A549 (cell line): ENCODE measurements at regions of chr15 and their contacts with region 1.

Region 1: DNA sequence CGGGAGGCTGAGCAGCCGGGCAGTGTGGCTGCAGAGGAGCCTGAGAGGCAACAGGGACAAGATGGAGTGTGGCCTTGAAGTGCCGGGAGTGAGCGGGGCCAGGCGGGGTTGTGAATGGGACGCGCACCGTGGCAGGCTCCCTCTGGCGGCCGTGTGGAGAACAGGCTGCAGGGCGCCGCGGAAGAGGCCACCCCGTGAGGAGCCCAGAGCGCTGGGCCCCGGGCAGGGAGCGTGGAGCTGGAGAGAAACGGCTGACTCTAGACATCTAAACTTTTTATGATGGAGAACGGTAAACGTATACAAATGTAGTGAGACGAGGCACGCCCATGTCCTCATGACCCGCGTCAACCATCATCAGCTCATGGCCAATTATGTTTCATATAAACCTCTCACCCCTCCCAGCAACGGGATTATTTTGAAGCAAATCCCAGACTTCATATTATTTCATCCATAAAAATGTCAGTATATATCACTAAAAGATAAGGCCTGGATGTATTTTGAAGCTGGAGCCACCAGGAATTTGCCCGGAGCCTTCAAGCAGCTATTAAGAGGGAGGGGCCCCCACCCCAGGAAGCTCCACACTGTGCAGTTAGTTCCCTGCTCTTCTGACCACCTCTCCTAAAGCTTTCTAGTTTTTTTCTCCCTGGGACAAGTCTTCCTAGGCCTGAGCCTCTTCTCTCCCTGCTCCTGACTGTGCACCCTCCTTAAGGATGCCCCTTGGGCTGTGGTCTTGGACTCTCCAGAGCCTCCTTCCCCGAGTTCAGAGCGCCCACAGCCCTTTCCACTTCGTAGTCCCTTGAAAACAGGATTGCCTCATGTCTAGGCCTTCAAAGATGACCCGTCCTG is 149.4 kb downstream of the SMAD6 start:
- DNase-seq: peak; percentile 92 to 97
- ATAC-seq: peak; percentile 87 to 95
- H3K4me3 ChIP-seq: no peak overlapping the region
- H3K27ac ChIP-seq: peak overlapping the region; percentile 64 to 81
- H3K4me1 ChIP-seq: peaks cover 34% of the 10 kb centered on the region
- CTCF ChIP-seq: peak; percentile 93
- EP300 ChIP-seq: no peak
- POLR2A ChIP-seq: no peak
- RAD21 ChIP-seq: peak; percentile 83 to 93

Region 2: GRCh38 chr15:66221126-66221525 is 630.3 kb before region 1 on chr15:
- CTCF ChIA-PET with region 1: no interaction called
- POLR2A ChIA-PET with region 1: no interaction called
- DNase-seq: no peak
- ATAC-seq: peak in 1 of 2 experiments; percentile 10; a peak in 1 of 6 replicates
- H3K4me3 ChIP-seq: no peak overlapping the region
- H3K27ac ChIP-seq: no peak overlapping the region
- H3K4me1 ChIP-seq: no peaks in the 10 kb centered on the region
- CTCF ChIP-seq: no peak
- EP300 ChIP-seq: no peak
- POLR2A ChIP-seq: no peak
- RAD21 ChIP-seq: no peak

Region 3: GRCh38 chr15:66619151-66619903 is 232.1 kb before region 1 on chr15:
- CTCF ChIA-PET with region 1: interaction called, 58 read pairs
- POLR2A ChIA-PET with region 1: interaction called, 4 read pairs
- DNase-seq: peak; percentile 83 to 92
- ATAC-seq: peak; percentile 87 to 95
- H3K4me3 ChIP-seq: no peak overlapping the region
- H3K27ac ChIP-seq: peak overlapping the region; percentile 69 to 81
- H3K4me1 ChIP-seq: peaks cover 18% of the 10 kb centered on the region
- CTCF ChIP-seq: peak; percentile 97
- EP300 ChIP-seq: no peak
- POLR2A ChIP-seq: no peak
- RAD21 ChIP-seq: peak; percentile 85 to 86

Region 4: DNA sequence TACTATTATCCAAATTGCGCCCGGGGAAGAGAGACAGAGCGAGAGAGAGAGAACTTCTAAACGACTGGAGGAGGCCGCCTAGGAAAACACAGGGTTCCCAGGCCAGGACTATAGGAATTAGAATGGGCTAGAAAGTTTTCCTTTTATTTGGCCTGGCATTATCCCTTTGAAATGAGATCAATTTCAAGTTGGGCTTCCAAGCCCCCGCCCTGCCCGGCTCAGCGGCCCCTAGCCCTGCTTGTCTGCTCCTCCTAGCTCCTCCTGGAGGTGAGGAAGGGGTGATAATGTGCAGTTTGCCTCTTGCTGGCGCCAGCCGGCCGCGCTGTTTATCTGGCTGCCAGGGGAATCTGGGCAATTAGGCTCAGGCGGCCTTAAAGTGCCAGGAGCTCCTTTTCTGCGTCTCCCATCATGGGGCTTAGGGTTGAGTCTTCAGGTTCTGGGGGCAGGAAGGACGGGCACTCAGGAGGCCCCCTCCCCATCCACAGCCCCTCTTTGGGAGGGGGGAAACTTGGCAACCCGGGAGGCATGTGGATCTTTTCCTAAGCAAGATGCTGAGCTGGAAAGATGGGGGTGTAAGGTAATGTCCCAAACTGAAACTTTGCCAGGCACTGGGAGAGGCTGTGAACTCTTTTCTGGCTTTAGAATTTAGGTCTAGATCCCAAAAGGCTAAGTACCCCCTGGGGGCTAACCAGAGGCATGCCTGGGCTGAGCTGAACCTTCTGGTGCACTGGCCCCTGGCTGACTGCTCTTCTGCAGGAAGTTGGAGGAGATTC is 144.0 kb before region 1 on chr15:
- CTCF ChIA-PET with region 1: interaction called, 283 read pairs
- POLR2A ChIA-PET with region 1: interaction called, 14 read pairs
- DNase-seq: peak; percentile 63 to 73
- ATAC-seq: peak; percentile 31 to 70; a peak in 4 of 6 replicates
- H3K4me3 ChIP-seq: peak overlapping the region; percentile 90; the same call in 2 of the 3 replicates
- H3K27ac ChIP-seq: peak overlapping the region; percentile 47 to 95
- H3K4me1 ChIP-seq: peaks cover 76% of the 10 kb centered on the region
- CTCF ChIP-seq: peak; percentile 41
- EP300 ChIP-seq: no peak
- POLR2A ChIP-seq: no peak
- RAD21 ChIP-seq: peak; percentile 53 to 68

Region 5: GRCh38 chr15:66765478-66766281 is 85.8 kb before region 1 on chr15:
- CTCF ChIA-PET with region 1: interaction called, 236 read pairs
- POLR2A ChIA-PET with region 1: interaction called, 3 read pairs
- DNase-seq: peak; percentile 95 to 97
- ATAC-seq: peak; percentile 71 to 75
- H3K4me3 ChIP-seq: no peak overlapping the region; the same call in 1 of the 3 replicates
- H3K27ac ChIP-seq: peak overlapping the region; percentile 93 to 94
- H3K4me1 ChIP-seq: peaks cover 97% of the 10 kb centered on the region
- CTCF ChIP-seq: no peak
- EP300 ChIP-seq: peak; percentile 95 to 98
- POLR2A ChIP-seq: no peak
- RAD21 ChIP-seq: peak in 1 of 2 experiments; percentile 67; a peak in 4 of 5 replicates

Region 6: GRCh38 chr15:66808181-66808825 is 43.1 kb before region 1 on chr15:
- CTCF ChIA-PET with region 1: interaction called, 51 read pairs
- POLR2A ChIA-PET with region 1: no interaction called
- DNase-seq: no peak
- ATAC-seq: no peak
- H3K4me3 ChIP-seq: no peak overlapping the region
- H3K27ac ChIP-seq: no peak overlapping the region
- H3K4me1 ChIP-seq: peaks cover 12% of the 10 kb centered on the region
- CTCF ChIP-seq: no peak
- EP300 ChIP-seq: no peak
- POLR2A ChIP-seq: no peak
- RAD21 ChIP-seq: no peak

Region 7: DNA sequence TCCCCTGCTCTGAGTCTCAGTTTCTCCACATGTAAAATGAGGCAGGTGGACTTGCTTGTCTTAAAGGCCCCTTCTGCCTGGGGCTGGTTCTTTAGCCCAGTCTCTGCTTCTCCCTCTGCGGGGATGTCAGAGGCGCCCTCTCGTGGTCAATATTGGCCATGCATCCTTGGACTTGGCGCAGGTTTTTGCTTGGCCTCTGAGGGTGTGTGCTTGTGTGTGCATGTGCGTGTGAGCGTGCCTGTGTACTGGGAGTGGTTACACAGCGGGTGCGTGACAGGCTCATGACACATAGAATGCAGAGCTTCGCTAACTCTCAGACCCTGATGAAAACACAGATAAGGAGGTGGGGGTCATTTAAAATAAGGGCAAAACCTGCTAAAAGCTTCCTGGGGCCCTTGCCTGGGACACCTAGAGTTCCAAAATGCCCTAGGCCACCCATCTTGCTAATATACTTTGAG is 11.5 kb after region 1 on chr15:
- CTCF ChIA-PET with region 1: interaction called, 224 read pairs
- POLR2A ChIA-PET with region 1: no interaction called
- DNase-seq: peak; percentile 87 to 90
- ATAC-seq: peak; percentile 85 to 97
- H3K4me3 ChIP-seq: no peak overlapping the region
- H3K27ac ChIP-seq: peak overlapping the region; percentile 1 to 66; a peak in 4 of 6 replicates
- H3K4me1 ChIP-seq: peaks cover 17% of the 10 kb centered on the region
- CTCF ChIP-seq: peak; percentile 98
- EP300 ChIP-seq: no peak
- POLR2A ChIP-seq: no peak
- RAD21 ChIP-seq: peak; percentile 83 to 87

Region 8: GRCh38 chr15:66968806-66969596 is 117.6 kb after region 1 on chr15:
- CTCF ChIA-PET with region 1: no interaction called
- POLR2A ChIA-PET with region 1: no interaction called
- DNase-seq: no peak
- ATAC-seq: no peak
- H3K4me3 ChIP-seq: no peak overlapping the region
- H3K27ac ChIP-seq: no peak overlapping the region
- H3K4me1 ChIP-seq: no peaks in the 10 kb centered on the region
- CTCF ChIP-seq: no peak
- EP300 ChIP-seq: no peak
- POLR2A ChIP-seq: no peak
- RAD21 ChIP-seq: no peak